ENCODE measurements at regions of chr2 and their contacts with region 1.

Region 1: GRCh38 chr2:45353879-45354278 is 257.2 kb downstream of the SRBD1 start:
- DNase-seq: no peak
- ATAC-seq: no peak
- H3K4me3 ChIP-seq: no peak overlapping the region
- H3K27ac ChIP-seq: no peak overlapping the region
- H3K4me1 ChIP-seq: no peaks in the 10 kb centered on the region
- H3K27me3 ChIP-seq: no peaks in the 10 kb centered on the region
- CTCF ChIP-seq: no peak
- EP300 ChIP-seq: no peak
- POLR2A ChIP-seq: no peak
- RAD21 ChIP-seq: no peak

Region 2: GRCh38 chr2:46923041-46923528 is 1569.2 kb after region 1 on chr2:
- CTCF ChIA-PET with region 1: no interaction called
- POLR2A ChIA-PET with region 1: interaction called, 11 read pairs
- RAD21 ChIA-PET with region 1: no interaction called
- SMC1A ChIA-PET with region 1: no interaction called
- in situ Hi-C with region 1: no loop called
- intact Hi-C with region 1: no loop called
- DNase-seq: no peak
- ATAC-seq: no peak
- H3K4me3 ChIP-seq: no peak overlapping the region
- H3K27ac ChIP-seq: no peak overlapping the region
- H3K4me1 ChIP-seq: peaks cover 4% of the 10 kb centered on the region
- H3K27me3 ChIP-seq: no peaks in the 10 kb centered on the region
- CTCF ChIP-seq: no peak
- EP300 ChIP-seq: no peak
- POLR2A ChIP-seq: no peak
- RAD21 ChIP-seq: no peak

Measured in GM12878 (cell line).